A673 (cell line): ENCODE measurements at regions of chr1 and their contacts with region 1.

Region 1: DNA sequence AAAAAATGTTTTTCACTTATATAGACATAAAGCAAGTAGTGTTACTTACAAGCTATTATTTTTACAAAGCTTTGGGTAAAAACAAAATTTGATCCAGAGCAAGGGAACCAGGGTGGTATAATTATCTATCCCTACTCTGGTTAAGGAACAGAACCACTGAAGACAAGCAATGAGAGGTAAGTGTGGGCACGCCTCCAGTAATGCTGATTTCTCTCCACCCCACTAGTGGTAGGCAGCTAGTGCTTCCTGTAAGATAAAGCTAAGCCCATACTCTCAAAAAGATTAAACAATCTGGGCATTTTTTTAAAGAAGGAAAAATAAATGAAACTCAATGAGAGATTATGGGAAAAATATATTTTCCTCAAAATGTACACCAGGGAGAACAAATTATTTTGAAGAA is 22.1 kb downstream of the TFB2M start:
- DNase-seq: no peak
- H3K4me3 ChIP-seq: no peak overlapping the region
- H3K27ac ChIP-seq: no peak overlapping the region
- H3K4me1 ChIP-seq: no peaks in the 10 kb centered on the region
- H3K27me3 ChIP-seq: no peaks in the 10 kb centered on the region
- CTCF ChIP-seq: no peak

Region 2: DNA sequence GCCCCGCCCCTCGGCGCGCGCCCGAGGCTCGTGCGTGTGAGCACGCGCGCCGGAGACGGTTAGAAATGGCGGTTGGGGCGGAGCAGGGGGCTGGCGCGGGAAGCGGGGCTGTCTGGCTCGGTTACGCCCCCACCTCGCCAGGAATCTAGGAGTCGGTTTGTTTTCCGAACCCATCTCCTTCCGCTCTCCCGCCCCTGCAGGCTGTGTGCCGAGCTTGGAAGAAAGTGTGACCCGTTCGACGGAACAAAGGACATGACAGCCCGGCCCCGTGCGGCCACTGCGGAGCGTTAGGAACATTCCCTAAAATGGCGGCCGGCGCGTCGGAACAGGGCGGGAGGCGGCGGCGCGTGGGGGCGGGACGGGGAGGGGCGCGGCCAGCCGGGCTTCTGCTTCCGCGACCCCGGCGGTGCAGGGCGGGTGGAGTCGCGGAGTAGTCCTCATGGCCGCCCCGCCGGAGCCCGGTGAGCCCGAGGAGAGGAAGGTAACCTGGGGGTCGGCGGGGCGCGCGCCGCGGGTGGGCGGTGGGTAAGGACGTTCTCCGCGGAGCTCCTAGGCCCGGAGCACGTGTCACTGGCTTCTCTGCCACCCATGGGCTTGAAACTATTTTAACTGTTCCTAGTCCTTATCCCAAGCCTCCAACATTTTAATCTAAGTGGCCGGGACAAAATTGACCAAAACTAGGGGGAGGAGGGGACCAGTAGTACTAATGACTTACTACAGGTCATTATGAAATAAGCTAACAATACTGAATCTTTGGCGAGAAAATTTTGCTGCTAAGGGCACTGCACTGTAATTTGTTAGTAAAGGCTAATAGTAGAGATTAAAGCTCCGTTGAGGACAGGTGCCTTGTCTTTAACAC is 1708.5 kb before region 1 on chr1 and contains the start of gene COX20:
- CTCF ChIA-PET with region 1: no interaction called
- POLR2A ChIA-PET with region 1: no interaction called
- intact Hi-C with region 1: no loop called
- DNase-seq: peak; percentile 95
- H3K4me3 ChIP-seq: peak within 1 kb of the TSS; percentile 72
- H3K27ac ChIP-seq: peak within 1 kb of the TSS; percentile 97
- H3K4me1 ChIP-seq: peaks cover 23% of the 10 kb centered on the region
- H3K27me3 ChIP-seq: no peaks in the 10 kb centered on the region
- CTCF ChIP-seq: no peak
- total RNA-seq, gene COX20: 48.0 and 59.0 TPM in 2 replicates

Region 3: DNA sequence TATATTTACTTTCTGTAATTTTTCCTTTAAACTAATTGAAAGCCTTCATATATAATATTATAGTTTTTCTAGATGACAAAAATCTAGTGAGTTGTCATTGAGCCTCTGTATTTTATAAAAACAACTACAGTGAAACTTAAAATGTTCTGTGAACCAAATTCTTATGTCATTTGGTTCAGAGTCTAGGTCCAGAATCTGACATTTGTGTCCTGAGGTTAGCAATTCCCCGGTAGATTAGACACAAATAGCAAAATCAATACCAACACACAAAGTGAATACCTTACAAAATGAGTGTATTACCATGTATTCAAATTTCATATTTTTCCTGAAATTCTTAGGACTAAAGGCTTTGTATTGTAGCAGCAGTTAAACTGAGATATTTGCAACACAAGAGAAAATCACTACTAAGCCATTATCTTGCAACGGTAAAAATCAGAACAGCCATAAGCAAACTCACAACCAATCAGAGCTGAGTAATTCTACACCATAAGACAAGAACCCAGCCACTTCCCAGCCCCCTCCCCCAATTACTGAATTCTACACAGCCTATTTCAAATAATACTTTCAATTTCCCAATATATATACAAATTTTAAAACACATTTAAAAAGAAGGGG is 610.5 kb before region 1 on chr1:
- CTCF ChIA-PET with region 1: no interaction called
- POLR2A ChIA-PET with region 1: no interaction called
- intact Hi-C with region 1: no loop called
- DNase-seq: no peak
- H3K4me3 ChIP-seq: no peak overlapping the region
- H3K27ac ChIP-seq: no peak overlapping the region
- H3K4me1 ChIP-seq: no peaks in the 10 kb centered on the region
- H3K27me3 ChIP-seq: no peaks in the 10 kb centered on the region
- CTCF ChIP-seq: no peak

Region 4: DNA sequence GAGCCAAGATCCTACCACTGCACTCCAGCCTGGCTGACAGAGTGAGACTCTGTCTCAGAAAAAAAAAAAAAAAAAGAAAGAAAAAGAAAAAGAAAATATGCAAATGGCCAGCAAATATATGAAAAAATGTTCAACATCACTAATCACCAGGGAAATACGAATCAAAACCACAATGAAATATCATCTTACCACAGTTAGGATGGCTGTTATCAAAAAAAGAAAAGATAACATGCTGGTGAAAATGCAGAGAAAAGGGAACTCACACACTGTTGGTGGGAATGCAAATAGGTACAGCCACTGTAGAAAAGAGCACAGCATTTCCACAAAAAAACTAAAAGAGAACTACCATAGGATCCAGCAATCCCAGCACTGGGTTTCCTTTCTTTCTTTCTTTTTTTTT is 514.4 kb before region 1 on chr1:
- CTCF ChIA-PET with region 1: no interaction called
- POLR2A ChIA-PET with region 1: no interaction called
- intact Hi-C with region 1: no loop called
- DNase-seq: no peak
- H3K4me3 ChIP-seq: no peak overlapping the region
- H3K27ac ChIP-seq: no peak overlapping the region
- H3K4me1 ChIP-seq: no peaks in the 10 kb centered on the region
- H3K27me3 ChIP-seq: no peaks in the 10 kb centered on the region
- CTCF ChIP-seq: no peak

Region 5: GRCh38 chr1:246566128-246566812 is 22.3 kb after region 1 on chr1 and contains the starts of genes CNST and TFB2M:
- CTCF ChIA-PET with region 1: no interaction called
- POLR2A ChIA-PET with region 1: interaction called, 10 read pairs
- intact Hi-C with region 1: no loop called
- DNase-seq: peak; percentile 99
- H3K4me3 ChIP-seq: peak within 1 kb of the TSS; percentile 80
- H3K27ac ChIP-seq: peak within 1 kb of the TSS; percentile 78
- H3K4me1 ChIP-seq: peaks cover 23% of the 10 kb centered on the region
- H3K27me3 ChIP-seq: no peaks in the 10 kb centered on the region
- CTCF ChIP-seq: no peak
- total RNA-seq, gene CNST: 21.0 and 25.0 TPM in 2 replicates
- total RNA-seq, gene TFB2M: 18.0 and 21.1 TPM in 2 replicates